ENCODE measurements at regions of chr12 and their contacts with region 1.

Region 1: GRCh38 chr12:121793838-121794533 is 498 bp upstream of the RHOF start:
- DNase-seq: peak; percentile 96

Region 2: DNA sequence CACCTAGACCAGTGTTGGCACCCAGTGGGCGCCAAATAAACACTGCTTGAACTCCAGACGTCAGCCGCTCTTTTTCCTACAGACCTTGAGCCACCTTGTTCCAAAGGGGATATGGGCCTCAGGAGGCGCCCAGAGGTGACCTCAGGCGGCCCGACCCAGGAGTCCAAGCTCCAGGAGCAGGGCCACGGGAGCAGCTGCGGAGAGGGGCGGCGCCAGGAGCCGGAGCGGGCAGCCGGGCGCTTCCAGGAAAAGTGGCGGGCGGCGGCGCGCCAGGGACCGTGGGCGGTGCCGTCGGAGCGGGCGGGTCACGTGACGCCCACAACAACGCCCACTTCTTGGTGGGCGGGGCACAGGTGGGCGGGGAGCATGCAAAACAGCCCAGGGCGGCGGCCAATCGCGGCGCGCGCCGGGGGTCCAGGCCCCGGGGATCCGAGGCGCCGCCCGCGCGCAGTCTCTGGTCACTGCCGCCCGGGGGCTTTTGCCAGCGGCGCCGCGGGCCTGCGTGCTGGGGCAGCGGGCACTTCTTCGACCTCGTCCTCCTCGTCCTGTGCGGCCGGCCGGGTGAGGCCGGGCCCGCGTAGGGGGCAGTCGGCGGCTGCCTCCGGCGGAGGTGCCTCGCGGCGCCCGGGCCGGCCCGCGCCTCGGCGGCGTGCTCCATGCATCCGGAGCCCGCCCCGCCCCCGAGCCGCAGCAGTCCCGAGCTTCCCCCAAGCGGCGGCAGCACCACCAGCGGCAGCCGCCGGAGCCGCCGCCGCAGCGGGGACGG is 167.7 kb before region 1 on chr12 and contains the start of gene ORAI1:
- intact Hi-C with region 1: loop called (anchors 5 kb)
- DNase-seq: peak; percentile 99
- total RNA-seq, gene ORAI1: 8.0 TPM

Region 3: GRCh38 chr12:121697098-121697698 is 96.8 kb before region 1 on chr12:
- intact Hi-C with region 1: loop called (anchors 1 kb)
- DNase-seq: no peak

Region 4: GRCh38 chr12:121712461-121713256 is 81.3 kb before region 1 on chr12 and contains the start of gene TMEM120B:
- intact Hi-C with region 1: no loop called
- DNase-seq: peak; percentile 96
- total RNA-seq, gene TMEM120B: 6.2 TPM

Region 5: GRCh38 chr12:121773011-121773777 is 20.8 kb before region 1 on chr12:
- intact Hi-C with region 1: loop called (anchors 2 kb)
- DNase-seq: no peak

Region 6: GRCh38 chr12:121811434-121812319 is 17.7 kb after region 1 on chr12:
- intact Hi-C with region 1: loop called (anchors 1 kb)
- DNase-seq: peak; percentile 89

Region 7: DNA sequence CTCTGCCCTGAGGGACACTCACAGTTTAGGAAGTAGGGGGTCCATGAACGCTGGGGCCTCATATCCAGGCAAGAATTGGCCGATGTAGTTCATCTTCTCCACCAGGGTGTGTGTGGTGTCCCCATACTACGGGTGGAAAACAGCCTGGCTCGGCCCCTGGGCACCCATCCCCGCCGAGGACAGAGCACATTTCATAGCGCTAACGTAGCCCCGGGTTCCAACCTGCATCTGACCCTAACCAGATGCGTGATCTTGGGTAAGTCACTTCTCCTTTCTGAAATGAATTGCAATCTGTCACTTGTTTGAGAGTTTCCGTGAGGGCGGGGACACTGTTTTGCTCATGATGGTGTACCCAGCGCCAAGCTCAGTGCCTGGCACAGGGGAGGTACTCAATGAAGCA is 55.7 kb after region 1 on chr12:
- intact Hi-C with region 1: no loop called
- DNase-seq: no peak

Region 8: GRCh38 chr12:121888478-121889266 is 94.7 kb after region 1 on chr12 and contains the start of gene PSMD9:
- intact Hi-C with region 1: loop called (anchors 2 kb)
- DNase-seq: peak; percentile 99
- total RNA-seq, gene PSMD9: 31.2 TPM

Region 9: DNA sequence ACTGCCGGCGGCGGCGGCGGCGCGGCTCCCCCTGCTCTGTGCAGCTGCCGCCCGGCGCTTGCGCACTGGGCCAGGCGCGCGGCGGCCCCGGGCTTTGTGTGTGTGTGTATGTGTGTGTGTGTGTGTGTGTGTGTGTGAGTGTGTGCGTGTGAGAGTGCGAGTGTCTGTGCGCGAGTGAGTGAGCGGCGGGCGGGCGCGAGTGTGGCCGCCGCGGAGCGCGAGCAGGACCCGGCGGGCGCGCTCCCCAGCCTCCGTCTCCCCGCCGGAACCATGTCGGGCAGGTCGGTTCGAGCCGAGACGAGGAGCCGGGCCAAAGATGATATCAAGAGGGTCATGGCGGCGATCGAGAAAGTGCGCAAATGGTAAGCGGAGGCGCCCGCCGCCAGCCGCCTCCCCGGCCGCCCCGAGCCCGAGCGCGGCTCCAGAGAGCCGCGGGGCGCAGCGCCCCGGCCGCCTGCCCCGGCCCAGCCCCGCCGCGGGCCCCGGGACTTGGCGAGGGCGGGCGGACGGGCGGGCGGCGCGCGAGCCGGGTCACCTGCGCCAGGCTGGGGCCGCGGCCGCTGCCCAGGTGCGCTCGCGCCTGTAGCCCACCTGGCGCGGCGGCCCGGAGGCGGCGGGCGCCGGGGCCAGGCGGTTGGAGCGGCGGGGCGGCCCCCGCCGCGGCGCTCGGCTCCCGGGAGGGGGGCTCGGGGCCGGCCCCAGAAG is 228.0 kb after region 1 on chr12 and contains the start of gene BCL7A:
- intact Hi-C with region 1: loop called (anchors 10 kb)
- DNase-seq: no peak
- total RNA-seq, gene BCL7A: 18.2 TPM

Measured in cardiac septum (tissue), 1 donor.